HEK293 (cell line): ENCODE measurements at regions of chr16 and their contacts with region 1.

Region 1: DNA sequence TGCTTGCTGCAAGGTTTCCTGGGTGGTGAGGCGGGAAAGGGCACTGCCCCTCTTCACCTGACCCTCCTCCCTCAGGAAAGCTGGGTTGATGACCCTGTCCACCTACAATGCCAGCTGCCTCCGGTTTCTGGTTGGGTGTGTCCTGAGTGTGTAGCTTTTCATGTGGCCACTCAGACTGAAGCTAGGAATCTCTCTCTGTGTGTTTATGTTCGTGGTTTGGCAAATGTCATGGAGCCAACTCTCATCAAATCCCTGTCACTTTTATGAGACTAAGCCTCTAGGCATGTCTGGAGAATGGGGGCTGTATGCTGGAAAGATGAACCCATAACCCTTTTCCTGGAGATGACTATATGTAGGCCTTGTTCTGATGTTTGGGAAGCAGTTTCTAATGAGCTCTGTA is 17.1 kb downstream of the PLEKHG4 start:
- H3K4me3 ChIP-seq: no peak overlapping the region
- H3K27ac ChIP-seq: no peak overlapping the region
- H3K4me1 ChIP-seq: no peaks in the 10 kb centered on the region
- CTCF ChIP-seq: no peak

Region 2: DNA sequence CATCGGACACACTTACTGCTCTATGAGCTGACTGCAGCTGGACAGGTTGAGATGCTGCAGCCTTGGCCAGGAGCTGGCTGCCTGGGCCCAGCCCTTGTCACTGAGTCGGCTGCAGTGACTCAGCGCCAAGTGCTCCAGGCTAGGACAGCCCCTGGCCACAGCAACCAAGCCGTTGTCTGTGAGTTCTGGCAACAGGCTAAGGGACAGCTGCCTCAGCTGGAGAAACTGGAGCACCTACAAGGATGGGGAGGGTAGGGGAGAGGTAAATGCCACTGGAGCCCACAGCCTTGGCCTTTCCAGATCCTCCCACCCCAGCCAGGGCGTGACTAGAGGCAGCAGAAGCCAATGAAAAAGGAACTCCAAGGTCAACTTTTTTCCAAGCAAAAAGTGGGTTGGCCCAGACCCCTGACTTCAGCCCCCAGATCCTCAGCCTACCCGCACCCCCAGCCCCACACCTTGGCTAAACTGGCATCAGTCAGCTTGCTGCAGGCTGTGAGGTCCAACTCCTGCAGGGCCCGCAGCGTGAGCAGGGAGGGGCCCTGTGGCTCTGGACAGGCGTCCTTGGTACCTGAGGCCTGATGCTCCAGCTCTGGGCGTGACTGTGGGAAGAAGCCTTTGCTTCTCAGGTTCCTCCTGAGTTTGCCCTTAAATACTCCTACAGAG is 88.4 kb before region 1 on chr16:
- CTCF ChIA-PET with region 1: no interaction called
- POLR2A ChIA-PET with region 1: no interaction called
- H3K4me3 ChIP-seq: no peak overlapping the region
- H3K27ac ChIP-seq: no peak overlapping the region
- H3K4me1 ChIP-seq: no peaks in the 10 kb centered on the region
- CTCF ChIP-seq: no peak

Region 3: GRCh38 chr16:67284699-67285646 is 11.4 kb before region 1 on chr16:
- CTCF ChIA-PET with region 1: interaction called, 26 read pairs
- POLR2A ChIA-PET with region 1: no interaction called
- H3K4me3 ChIP-seq: no peak overlapping the region
- H3K27ac ChIP-seq: no peak overlapping the region
- H3K4me1 ChIP-seq: no peaks in the 10 kb centered on the region
- CTCF ChIP-seq: peak; percentile 48; the same call in 1 of the 2 replicates